Naive thymus-derived CD4-positive, alpha-beta T cell (primary cell): ENCODE measurements at regions of chr2 and their contacts with region 1.

Region 1: GRCh38 chr2:29164091-29164846 is 49.1 kb downstream of the CLIP4 start:
- DNase-seq: no peak
- ATAC-seq: no peak
- H3K4me3 ChIP-seq: no peak overlapping the region
- H3K4me3 Mint-ChIP-seq: no peak overlapping the region
- H3K27ac ChIP-seq: no peak overlapping the region
- H3K27ac Mint-ChIP-seq: no peak overlapping the region
- H3K4me1 ChIP-seq: no peaks in the 10 kb centered on the region
- H3K4me1 Mint-ChIP-seq: peaks cover 0 to 1% (median 0%) of the 10 kb centered on the region in 7 donors
- H3K27me3 ChIP-seq: no peaks in the 10 kb centered on the region
- H3K27me3 Mint-ChIP-seq: no peaks in the 10 kb centered on the region

Region 2: GRCh38 chr2:29130295-29130694 is 34.0 kb before region 1 on chr2:
- CTCF ChIA-PET with region 1: no interaction called
- POLR2A ChIA-PET with region 1: no interaction called
- intact Hi-C with region 1: loop called in 1 of 2 experiments (anchors 5 kb)
- DNase-seq: no peak
- ATAC-seq: no peak
- H3K4me3 ChIP-seq: no peak overlapping the region
- H3K4me3 Mint-ChIP-seq: peak overlapping the region in 1 of 10 donors; percentile 24
- H3K27ac ChIP-seq: no peak overlapping the region
- H3K27ac Mint-ChIP-seq: peak overlapping the region in 2 of 9 donors; percentile 14 to 38
- H3K4me1 ChIP-seq: no peaks in the 10 kb centered on the region
- H3K4me1 Mint-ChIP-seq: peaks cover 7 to 27% (median 17%) of the 10 kb centered on the region in 7 donors
- H3K27me3 ChIP-seq: no peaks in the 10 kb centered on the region
- H3K27me3 Mint-ChIP-seq: no peaks in the 10 kb centered on the region